WTC11 (cell line): ENCODE measurements at regions of chr3 and their contacts with region 1.

Region 1: DNA sequence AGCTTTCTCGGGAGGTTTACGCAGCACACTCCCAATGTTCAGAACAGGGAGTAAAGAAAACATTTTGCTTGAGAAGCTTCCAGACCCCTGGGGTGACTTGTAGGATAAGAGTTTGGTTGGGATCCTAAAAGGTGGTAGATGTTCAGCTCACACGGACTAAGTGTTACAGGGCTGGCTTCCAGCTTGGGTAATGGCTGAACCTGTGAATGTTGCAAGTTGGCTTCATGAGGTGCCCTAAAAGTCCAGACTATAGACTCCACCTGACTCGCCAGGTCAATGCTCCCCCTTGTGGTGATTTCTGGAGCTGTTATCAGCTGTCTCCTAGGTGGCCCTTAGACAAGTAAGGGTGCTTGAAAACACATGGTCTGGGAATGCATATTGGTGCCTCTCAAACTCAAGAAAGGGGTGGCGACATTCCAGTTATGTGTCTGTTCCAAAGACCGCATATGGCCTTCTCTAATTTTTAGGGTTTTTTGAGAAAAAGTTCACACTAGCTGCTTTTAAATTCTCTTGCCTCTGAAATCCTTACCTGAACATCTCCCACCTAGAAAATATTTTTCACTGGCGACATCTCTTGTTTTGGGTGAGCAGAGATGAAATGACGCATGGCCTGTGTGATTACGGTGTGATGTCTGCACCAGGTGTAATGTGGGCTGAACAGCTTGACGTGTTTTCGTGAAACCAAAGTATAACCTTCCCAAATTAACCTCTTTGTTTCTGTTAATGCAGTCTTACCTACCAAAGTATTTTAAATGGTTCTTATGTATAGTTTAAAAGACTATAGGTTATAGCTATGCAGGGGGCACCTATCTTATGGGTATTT is 175.7 kb upstream of the KBTBD8 start:
- DNase-seq: peak; percentile 86
- ATAC-seq: peak; percentile 96
- H3K4me3 Mint-ChIP-seq: no peak overlapping the region
- H3K27ac Mint-ChIP-seq: no peak overlapping the region
- H3K4me1 Mint-ChIP-seq: peaks cover 37% of the 10 kb centered on the region
- H3K27me3 Mint-ChIP-seq: no peaks in the 10 kb centered on the region
- CTCF ChIP-seq: peak; percentile 82

Region 2: GRCh38 chr3:66066963-66067629 is 755.3 kb before region 1 on chr3:
- CTCF ChIA-PET with region 1: no interaction called
- POLR2A ChIA-PET with region 1: no interaction called
- DNase-seq: no peak
- ATAC-seq: no peak
- H3K4me3 Mint-ChIP-seq: no peak overlapping the region
- H3K27ac Mint-ChIP-seq: no peak overlapping the region
- H3K4me1 Mint-ChIP-seq: peaks cover 26% of the 10 kb centered on the region
- H3K27me3 Mint-ChIP-seq: peaks cover 25% of the 10 kb centered on the region
- CTCF ChIP-seq: no peak

Region 3: DNA sequence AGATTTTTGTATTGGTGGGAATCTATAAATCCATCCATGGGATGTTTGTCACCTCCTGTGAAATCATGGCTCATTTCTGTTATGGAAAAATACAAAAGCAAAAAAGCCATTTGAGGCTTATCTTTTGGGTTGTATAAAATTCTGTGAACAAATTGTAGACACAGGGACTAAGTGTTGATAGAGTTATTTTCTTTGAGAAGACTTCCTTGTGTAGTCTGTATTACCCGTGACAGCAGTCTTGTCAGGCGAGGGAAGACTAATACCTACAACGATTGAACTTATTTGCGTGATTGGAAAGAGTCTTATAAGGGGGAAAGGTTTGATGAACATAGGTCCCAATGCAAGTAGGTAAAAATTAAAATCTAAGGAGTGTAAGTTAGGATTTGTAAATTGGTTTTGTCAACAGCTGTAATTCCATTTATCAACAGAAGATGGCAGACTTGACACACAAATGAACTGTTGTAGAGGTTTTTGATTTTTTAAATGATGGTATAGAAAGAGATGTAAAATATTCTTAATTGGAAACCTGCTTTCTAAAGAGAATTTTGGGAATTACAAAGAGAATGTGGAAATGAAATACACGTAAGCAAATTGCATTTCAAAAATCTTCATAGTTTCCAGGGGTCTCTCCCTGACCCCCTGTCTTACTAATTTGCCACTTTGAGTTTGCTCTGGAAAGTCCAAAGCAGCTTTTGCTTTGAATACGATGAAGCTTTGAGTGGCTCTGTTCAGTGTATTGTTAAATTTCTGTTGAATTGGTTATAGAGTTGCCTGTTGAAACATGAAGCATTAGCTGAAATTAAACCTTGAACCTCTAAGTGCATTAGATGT is 568.4 kb before region 1 on chr3:
- CTCF ChIA-PET with region 1: interaction called, 14 read pairs
- POLR2A ChIA-PET with region 1: no interaction called
- DNase-seq: no peak
- ATAC-seq: no peak
- H3K4me3 Mint-ChIP-seq: no peak overlapping the region
- H3K27ac Mint-ChIP-seq: no peak overlapping the region
- H3K4me1 Mint-ChIP-seq: no peaks in the 10 kb centered on the region
- H3K27me3 Mint-ChIP-seq: no peaks in the 10 kb centered on the region
- CTCF ChIP-seq: peak; percentile 78

Region 4: GRCh38 chr3:66372681-66373350 is 449.6 kb before region 1 on chr3:
- CTCF ChIA-PET with region 1: interaction called, 17 read pairs
- POLR2A ChIA-PET with region 1: no interaction called
- DNase-seq: peak; percentile 77
- ATAC-seq: peak; percentile 98
- H3K4me3 Mint-ChIP-seq: no peak overlapping the region
- H3K27ac Mint-ChIP-seq: no peak overlapping the region
- H3K4me1 Mint-ChIP-seq: no peaks in the 10 kb centered on the region
- H3K27me3 Mint-ChIP-seq: no peaks in the 10 kb centered on the region
- CTCF ChIP-seq: no peak

Region 5: GRCh38 chr3:66407611-66408218 is 414.7 kb before region 1 on chr3:
- CTCF ChIA-PET with region 1: interaction called, 19 read pairs
- POLR2A ChIA-PET with region 1: no interaction called
- DNase-seq: peak; percentile 90
- ATAC-seq: peak; percentile 86
- H3K4me3 Mint-ChIP-seq: no peak overlapping the region
- H3K27ac Mint-ChIP-seq: peak overlapping the region; percentile 66
- H3K4me1 Mint-ChIP-seq: peaks cover 46% of the 10 kb centered on the region
- H3K27me3 Mint-ChIP-seq: no peaks in the 10 kb centered on the region
- CTCF ChIP-seq: peak; percentile 95

Region 6: GRCh38 chr3:66809595-66809958 is 12.8 kb before region 1 on chr3:
- CTCF ChIA-PET with region 1: interaction called, 25 read pairs
- POLR2A ChIA-PET with region 1: no interaction called
- DNase-seq: no peak
- ATAC-seq: peak; percentile 48; the same call in 1 of the 2 replicates
- H3K4me3 Mint-ChIP-seq: no peak overlapping the region
- H3K27ac Mint-ChIP-seq: no peak overlapping the region
- H3K4me1 Mint-ChIP-seq: peaks cover 15% of the 10 kb centered on the region
- H3K27me3 Mint-ChIP-seq: no peaks in the 10 kb centered on the region
- CTCF ChIP-seq: no peak

Region 7: DNA sequence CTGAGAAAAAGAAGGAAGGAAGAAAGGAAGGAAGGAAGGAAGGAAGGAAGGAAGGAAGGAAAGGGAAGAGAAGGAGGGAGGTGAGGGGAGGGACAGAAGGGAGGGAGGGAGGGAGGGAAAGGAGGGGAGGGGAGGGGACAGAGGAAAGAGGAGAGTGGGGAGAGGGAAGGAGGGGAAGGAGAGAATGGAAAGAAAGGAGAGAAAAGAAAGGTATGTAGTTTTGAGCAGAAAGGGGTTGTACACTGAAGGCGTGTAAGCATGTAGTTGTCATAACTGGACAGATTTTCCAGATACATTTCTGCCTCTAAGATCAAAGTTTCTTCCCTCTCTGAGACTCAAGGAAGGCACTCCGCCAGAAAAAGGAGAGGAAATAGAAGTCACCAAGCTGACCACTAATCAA is 62.3 kb after region 1 on chr3:
- CTCF ChIA-PET with region 1: no interaction called
- POLR2A ChIA-PET with region 1: no interaction called
- DNase-seq: no peak
- ATAC-seq: no peak
- H3K4me3 Mint-ChIP-seq: no peak overlapping the region
- H3K27ac Mint-ChIP-seq: no peak overlapping the region
- H3K4me1 Mint-ChIP-seq: peaks cover 12% of the 10 kb centered on the region
- H3K27me3 Mint-ChIP-seq: no peaks in the 10 kb centered on the region; the same call in 1 of the 2 replicates
- CTCF ChIP-seq: no peak